Right cardiac atrium (tissue), 5 donors: ENCODE measurements at regions of chr2 and their contacts with region 1.

Region 1: DNA sequence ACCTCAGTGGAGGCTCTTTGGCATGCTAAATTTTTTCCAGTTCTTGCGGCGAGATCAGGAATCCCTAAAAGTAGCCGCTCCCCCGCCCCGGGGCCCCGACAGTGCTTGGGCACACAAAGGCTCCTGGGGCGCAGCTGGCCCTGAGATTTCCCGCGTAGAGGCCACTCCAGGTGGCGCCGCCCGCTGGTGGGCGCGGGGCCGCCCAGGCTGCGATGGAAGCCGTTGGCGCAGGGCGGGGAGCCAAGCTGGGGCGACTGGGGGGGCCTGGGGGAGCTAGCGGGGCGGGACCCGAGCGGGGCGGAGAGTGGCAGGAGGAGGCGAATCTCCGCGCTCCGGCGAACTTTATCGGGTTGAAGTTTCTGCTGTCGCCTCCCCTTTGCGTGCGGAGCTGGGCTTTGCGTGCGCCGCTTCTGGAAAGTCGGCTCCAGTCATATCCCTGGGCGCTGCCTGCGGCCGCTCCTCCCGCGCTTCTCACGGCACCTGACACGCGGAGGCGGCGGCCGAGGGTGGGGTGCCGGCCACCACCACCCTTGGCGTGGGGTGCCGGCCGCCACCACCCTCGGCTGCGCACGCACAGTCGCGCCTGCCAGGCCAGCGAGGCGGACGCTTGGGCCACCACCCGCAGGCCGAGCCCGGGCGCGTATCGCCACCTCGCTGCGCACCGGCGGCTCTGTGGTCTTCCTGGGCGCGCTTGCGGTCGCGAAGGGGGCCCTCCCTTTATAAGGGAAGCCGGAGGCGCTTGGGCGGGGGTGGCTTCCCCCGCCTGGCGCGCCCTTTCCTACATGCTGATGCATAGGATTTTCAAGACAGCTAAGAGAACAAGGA is 867 bp upstream of the CYP1B1 start:
- DNase-seq: peak; percentile 90 to 94 (median 94)
- ATAC-seq: peak; percentile 85 to 87
- H3K4me3 ChIP-seq: peak overlapping the region; percentile 66
- H3K27ac ChIP-seq: peak overlapping the region; percentile 68
- H3K4me1 ChIP-seq: peaks cover 2% of the 10 kb centered on the region
- H3K27me3 ChIP-seq: no peaks in the 10 kb centered on the region

Region 2: GRCh38 chr2:38109732-38110181 is 32.9 kb after region 1 on chr2:
- intact Hi-C with region 1: loop called in 2 of 4 experiments (anchors 2 to 5 kb)
- DNase-seq: no peak
- ATAC-seq: no peak
- H3K4me3 ChIP-seq: no peak overlapping the region
- H3K27ac ChIP-seq: no peak overlapping the region
- H3K4me1 ChIP-seq: peaks cover 4% of the 10 kb centered on the region
- H3K27me3 ChIP-seq: no peaks in the 10 kb centered on the region

Region 3: DNA sequence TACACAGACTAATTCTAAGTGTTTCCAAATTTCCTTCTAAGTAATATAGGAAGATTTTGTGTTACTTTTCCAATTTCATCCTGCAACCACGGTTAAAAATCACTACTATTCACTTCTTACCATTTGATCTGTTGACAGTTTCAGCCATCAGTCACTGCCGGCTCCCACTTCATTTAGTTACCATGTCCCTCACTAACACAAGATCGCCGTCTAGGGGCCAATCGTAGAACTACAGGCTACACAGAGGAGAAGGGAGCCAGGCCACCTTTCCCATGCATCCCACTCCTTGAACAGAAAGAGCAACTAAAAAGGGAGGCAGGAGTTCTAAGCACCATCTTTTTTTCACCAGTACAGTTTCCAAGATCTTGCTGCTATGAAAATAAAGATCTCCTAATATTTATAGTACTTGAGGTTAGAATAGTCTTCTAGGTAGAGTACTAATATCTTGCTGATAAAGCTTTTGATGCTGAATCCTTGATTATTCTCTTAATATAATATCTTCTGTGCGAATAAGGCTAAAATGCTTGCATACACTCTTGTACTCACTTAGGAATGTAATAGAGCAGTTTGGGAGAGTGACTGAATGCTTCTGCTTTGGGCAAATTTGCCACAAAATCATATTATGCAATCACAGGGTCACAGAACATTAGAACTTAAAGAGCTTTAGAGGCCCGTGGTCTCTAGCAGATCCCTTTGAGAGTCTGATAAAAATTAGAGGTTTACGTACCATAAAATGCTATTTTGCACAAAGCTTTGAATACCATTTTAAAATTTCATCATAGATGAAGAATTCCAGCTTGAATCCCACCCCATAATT is 38.6 kb after region 1 on chr2:
- intact Hi-C with region 1: loop called in 1 of 4 experiments (anchors 5 kb)
- DNase-seq: peak; percentile 84 to 93 (median 88)
- ATAC-seq: peak; percentile 74 to 86
- H3K4me3 ChIP-seq: no peak overlapping the region
- H3K27ac ChIP-seq: no peak overlapping the region
- H3K4me1 ChIP-seq: peaks cover 6% of the 10 kb centered on the region
- H3K27me3 ChIP-seq: no peaks in the 10 kb centered on the region

Region 4: GRCh38 chr2:38665854-38666555 is 589.2 kb after region 1 on chr2 and contains the start of gene GALM:
- intact Hi-C with region 1: no loop called
- DNase-seq: peak; percentile 83 to 93 (median 92)
- ATAC-seq: peak; percentile 96 to 97
- H3K4me3 ChIP-seq: peak within 1 kb of the TSS; percentile 67
- H3K27ac ChIP-seq: peak within 1 kb of the TSS; percentile 86
- H3K4me1 ChIP-seq: no peaks in the 10 kb centered on the region
- H3K27me3 ChIP-seq: no peaks in the 10 kb centered on the region
- total RNA-seq, gene GALM: 11.4 to 23.0 (median 19.8) TPM